Mammary epithelial cell (primary cell): ENCODE measurements at regions of chr7 and their contacts with region 1.

Region 1: GRCh38 chr7:40753455-40753854 is 618.6 kb downstream of the SUGCT start:
- DNase-seq: peak; percentile 46
- H3K4me3 ChIP-seq: no peak overlapping the region
- H3K27ac ChIP-seq: no peak overlapping the region
- H3K4me1 ChIP-seq: no peaks in the 10 kb centered on the region
- H3K27me3 ChIP-seq: no peaks in the 10 kb centered on the region
- CTCF ChIP-seq: no peak

Region 2: DNA sequence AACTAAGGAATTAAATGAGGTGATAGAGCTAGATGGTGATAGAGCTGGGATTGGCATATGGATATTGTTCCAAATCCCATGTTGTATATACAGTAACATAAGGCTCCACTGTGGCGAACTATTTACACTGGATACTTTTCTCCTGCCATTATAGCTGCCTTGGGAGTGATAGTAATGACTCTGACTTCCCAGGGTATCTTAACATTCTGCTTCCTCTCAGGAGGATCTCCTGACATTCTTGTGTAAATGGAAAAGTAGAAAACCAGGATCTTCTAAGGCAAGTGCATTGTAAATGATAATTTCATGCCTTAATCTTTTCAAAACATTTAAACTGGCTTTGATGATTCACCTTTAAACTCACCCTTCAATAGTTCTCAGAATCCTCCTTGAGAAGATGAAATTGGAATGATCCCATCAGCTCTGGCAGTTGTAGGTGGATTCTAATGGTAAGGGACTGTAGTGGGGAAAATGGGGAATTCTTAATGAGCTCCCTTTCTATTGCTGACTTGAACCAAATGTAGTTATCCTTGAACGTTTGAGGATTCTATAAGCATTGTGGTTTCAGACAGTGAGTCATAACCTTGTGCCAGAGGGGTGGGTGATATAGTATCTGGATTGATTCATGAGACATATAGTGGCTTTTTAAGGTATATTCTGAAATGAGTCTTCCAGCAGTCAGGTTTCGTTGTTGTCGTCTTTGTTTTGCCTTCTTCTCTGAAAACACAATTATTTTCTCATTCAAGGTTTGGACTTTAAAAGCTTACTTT is 168.6 kb before region 1 on chr7:
- CTCF ChIA-PET with region 1: no interaction called
- dilution Hi-C with region 1: no loop called
- in situ Hi-C with region 1: no loop called
- intact Hi-C with region 1: loop called (anchors 1 kb)
- DNase-seq: peak; percentile 82
- H3K4me3 ChIP-seq: no peak overlapping the region
- H3K27ac ChIP-seq: peak overlapping the region; percentile 83
- H3K4me1 ChIP-seq: peaks cover 29% of the 10 kb centered on the region
- H3K27me3 ChIP-seq: no peaks in the 10 kb centered on the region
- CTCF ChIP-seq: no peak

Region 3: GRCh38 chr7:40717242-40717641 is 36.2 kb before region 1 on chr7:
- CTCF ChIA-PET with region 1: no interaction called
- dilution Hi-C with region 1: no loop called
- in situ Hi-C with region 1: no loop called
- intact Hi-C with region 1: no loop called
- DNase-seq: peak; percentile 93
- H3K4me3 ChIP-seq: peak overlapping the region in 2 of 3 experiments; percentile 9 to 28
- H3K27ac ChIP-seq: peak overlapping the region; percentile 67
- H3K4me1 ChIP-seq: peaks cover 34% of the 10 kb centered on the region
- H3K27me3 ChIP-seq: no peaks in the 10 kb centered on the region
- CTCF ChIP-seq: no peak